T-cell (primary cell): ENCODE measurements at regions of chr14 and their contacts with region 1.

Region 1: GRCh38 chr14:89669193-89669592 is 252.2 kb upstream of the FOXN3 start:
- DNase-seq: peak in 14 of 35 experiments; percentile 1 to 34 (median 6)
- ATAC-seq: peak in 3 of 4 experiments; percentile 38 to 46 (median 43)
- H3K4me3 ChIP-seq: no peak overlapping the region
- H3K4me3 Mint-ChIP-seq: no peak overlapping the region
- H3K27ac ChIP-seq: no peak overlapping the region
- H3K27ac Mint-ChIP-seq: peak overlapping the region; percentile 23 to 33
- H3K4me1 ChIP-seq: peaks cover 10 to 25% of the 10 kb centered on the region in 2 experiments
- H3K4me1 Mint-ChIP-seq: peaks cover 29 to 35% (median 35%) of the 10 kb centered on the region in 3 donors
- H3K27me3 ChIP-seq: no peaks in the 10 kb centered on the region
- H3K27me3 Mint-ChIP-seq: no peaks in the 10 kb centered on the region

Region 2: DNA sequence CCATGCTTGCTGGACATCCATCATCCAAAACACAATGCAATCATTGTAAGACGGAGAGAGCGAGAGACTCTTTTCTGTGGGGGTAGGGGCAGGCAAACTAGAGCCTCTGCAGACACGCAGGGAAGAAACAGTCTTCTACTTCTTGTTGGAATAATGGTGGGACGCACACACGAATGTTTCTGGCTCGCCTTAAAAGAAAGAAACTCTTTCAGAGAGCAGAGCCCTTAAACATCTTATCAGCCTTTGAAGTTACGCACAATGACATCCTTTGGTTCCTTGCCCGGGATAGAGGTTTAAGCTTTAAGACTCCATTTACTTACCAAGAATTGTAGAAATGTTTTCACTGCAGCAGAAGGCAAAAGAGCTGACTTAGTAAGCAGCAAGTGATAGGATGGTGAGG is 118.4 kb before region 1 on chr14:
- CTCF ChIA-PET with region 1: no interaction called
- POLR2A ChIA-PET with region 1: interaction called in 1 of 2 experiments, 15 read pairs
- DNase-seq: no peak
- ATAC-seq: peak in 2 of 4 experiments; percentile 19 to 55
- H3K4me3 ChIP-seq: no peak overlapping the region
- H3K4me3 Mint-ChIP-seq: peak overlapping the region in 1 of 3 donors; percentile 23
- H3K27ac ChIP-seq: no peak overlapping the region
- H3K27ac Mint-ChIP-seq: peak overlapping the region; percentile 18 to 53
- H3K4me1 ChIP-seq: peaks cover 0 to 8% of the 10 kb centered on the region in 2 experiments
- H3K4me1 Mint-ChIP-seq: peaks cover 57 to 71% (median 59%) of the 10 kb centered on the region in 3 donors
- H3K27me3 ChIP-seq: no peaks in the 10 kb centered on the region
- H3K27me3 Mint-ChIP-seq: no peaks in the 10 kb centered on the region

Region 3: GRCh38 chr14:89681086-89682018 is 12.2 kb after region 1 on chr14:
- CTCF ChIA-PET with region 1: no interaction called
- POLR2A ChIA-PET with region 1: no interaction called
- DNase-seq: peak in 19 of 35 experiments; percentile 5 to 55 (median 14)
- ATAC-seq: peak; percentile 67 to 84 (median 71)
- H3K4me3 ChIP-seq: peak overlapping the region; percentile 25 to 54
- H3K4me3 Mint-ChIP-seq: peak overlapping the region; percentile 58 to 83 (median 67)
- H3K27ac ChIP-seq: peak overlapping the region; percentile 63
- H3K27ac Mint-ChIP-seq: peak overlapping the region; percentile 93 to 94
- H3K4me1 ChIP-seq: peaks cover 27 to 28% of the 10 kb centered on the region in 2 experiments
- H3K4me1 Mint-ChIP-seq: peaks cover 36 to 40% (median 39%) of the 10 kb centered on the region in 3 donors
- H3K27me3 ChIP-seq: no peaks in the 10 kb centered on the region
- H3K27me3 Mint-ChIP-seq: no peaks in the 10 kb centered on the region

Region 4: DNA sequence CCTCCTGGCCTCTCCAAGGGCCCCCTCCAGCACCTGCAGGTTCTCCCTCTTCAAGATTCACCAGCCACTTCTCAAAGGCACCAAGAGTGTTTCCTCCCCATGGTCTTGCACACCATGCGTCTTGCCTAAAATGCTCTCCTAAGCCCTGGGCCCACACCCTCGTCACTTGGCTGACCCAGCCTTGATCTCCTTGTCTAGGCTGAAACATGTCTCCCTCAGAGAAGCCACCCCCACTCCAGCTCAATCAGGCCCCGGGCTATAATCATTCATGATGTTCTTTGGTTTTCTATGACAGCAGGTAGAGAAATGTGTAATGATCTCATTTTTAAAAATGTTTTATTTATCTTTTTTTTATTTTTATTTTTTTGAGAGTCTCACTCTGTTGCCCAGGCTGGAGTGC is 197.3 kb after region 1 on chr14:
- CTCF ChIA-PET with region 1: no interaction called
- POLR2A ChIA-PET with region 1: no interaction called
- DNase-seq: no peak
- ATAC-seq: no peak
- H3K4me3 ChIP-seq: no peak overlapping the region
- H3K4me3 Mint-ChIP-seq: no peak overlapping the region
- H3K27ac ChIP-seq: no peak overlapping the region
- H3K27ac Mint-ChIP-seq: no peak overlapping the region
- H3K4me1 ChIP-seq: no peaks in the 10 kb centered on the region
- H3K4me1 Mint-ChIP-seq: no peaks in the 10 kb centered on the region
- H3K27me3 ChIP-seq: no peaks in the 10 kb centered on the region
- H3K27me3 Mint-ChIP-seq: no peaks in the 10 kb centered on the region